BJ (cell line): ENCODE measurements at regions of chr17 and their contacts with region 1.

Region 1: GRCh38 chr17:8138672-8139371 is 13.4 kb downstream of the PER1 start:
- DNase-seq: peak; percentile 92
- H3K4me3 ChIP-seq: peak overlapping the region; percentile 47
- H3K27me3 ChIP-seq: no peaks in the 10 kb centered on the region
- CTCF ChIP-seq: peak; percentile 86

Region 2: DNA sequence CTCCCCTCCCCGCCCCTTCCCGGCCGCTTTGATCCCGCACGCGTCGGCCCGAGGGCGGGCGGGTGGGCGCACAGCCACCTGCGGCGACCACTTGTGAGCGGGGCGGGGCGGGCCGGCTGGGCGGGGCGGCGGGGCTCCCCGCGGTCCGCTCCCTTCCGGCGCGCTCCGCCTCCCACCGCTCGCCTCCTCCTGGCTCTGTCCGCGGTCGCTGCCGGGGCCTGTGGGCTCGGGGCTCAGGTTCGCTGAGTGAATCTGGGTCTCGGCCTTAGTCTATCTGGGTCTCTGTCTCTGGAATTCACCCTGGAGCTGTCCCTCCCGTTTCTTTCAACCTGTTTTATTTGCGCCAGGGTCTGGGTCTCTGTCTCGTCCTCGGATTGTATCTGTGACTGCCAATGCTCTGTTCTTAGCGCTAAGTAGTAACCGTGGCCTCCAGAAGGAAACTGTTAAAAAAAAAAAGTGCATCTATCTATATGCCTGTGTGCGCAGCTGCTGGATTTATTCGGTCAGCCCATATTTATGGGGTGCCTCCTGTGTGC is 12.2 kb before region 1 on chr17:
- CTCF ChIA-PET with region 1: interaction called, 29 read pairs
- POLR2A ChIA-PET with region 1: no interaction called
- DNase-seq: no peak
- H3K4me3 ChIP-seq: peak overlapping the region; percentile 56
- H3K27me3 ChIP-seq: no peaks in the 10 kb centered on the region; the same call in 1 of the 2 replicates
- CTCF ChIP-seq: no peak

Region 3: GRCh38 chr17:8156246-8156992 is 17.6 kb after region 1 on chr17:
- CTCF ChIA-PET with region 1: interaction called, 31 read pairs
- POLR2A ChIA-PET with region 1: interaction called, 6 read pairs
- DNase-seq: peak; percentile 100
- H3K4me3 ChIP-seq: peak overlapping the region; percentile 48
- H3K27me3 ChIP-seq: no peaks in the 10 kb centered on the region
- CTCF ChIP-seq: 0 out of 2 replicates have a peak, but pooled peaks have one; percentile 7